Activated CD4-positive, alpha-beta T cell treated with anti-CD3 and anti-CD28 coated beads for 36 hours (primary cell): ENCODE measurements at regions of chr17 and their contacts with region 1.

Region 1: GRCh38 chr17:76232342-76232741 is 8.0 kb downstream of the RNF157 start:
- DNase-seq: no peak
- ATAC-seq: no peak
- H3K4me3 Mint-ChIP-seq: no peak overlapping the region
- H3K27ac Mint-ChIP-seq: no peak overlapping the region
- H3K4me1 Mint-ChIP-seq: peaks cover 41% of the 10 kb centered on the region
- H3K27me3 Mint-ChIP-seq: no peaks in the 10 kb centered on the region

Region 2: DNA sequence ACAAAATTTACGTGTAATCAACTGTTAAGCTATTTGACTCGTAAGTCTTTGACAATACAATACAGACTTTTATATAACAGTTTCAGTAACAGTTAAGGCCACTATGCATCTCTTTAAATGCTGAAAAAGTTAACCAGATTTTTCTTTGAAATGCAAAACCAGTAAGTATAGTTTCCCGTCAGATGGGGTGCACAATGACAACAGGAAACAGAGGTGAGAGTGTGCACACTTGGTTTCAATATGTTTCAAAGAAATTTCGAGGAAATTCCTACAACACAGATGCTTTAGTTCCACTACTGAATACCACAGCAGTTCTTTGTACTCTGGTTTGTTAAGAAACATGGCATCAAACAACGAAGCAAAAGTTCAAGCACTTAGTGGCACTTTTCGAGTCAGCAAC is 40.4 kb before region 1 on chr17:
- CTCF ChIA-PET with region 1: interaction called, 4 read pairs
- POLR2A ChIA-PET with region 1: interaction called, 7 read pairs
- intact Hi-C with region 1: loop called in 1 of 2 experiments (anchors 5 kb)
- DNase-seq: peak; percentile 63
- ATAC-seq: peak; percentile 79
- H3K4me3 Mint-ChIP-seq: peak overlapping the region; percentile 61
- H3K27ac Mint-ChIP-seq: peak overlapping the region; percentile 96
- H3K4me1 Mint-ChIP-seq: peaks cover 80% of the 10 kb centered on the region
- H3K27me3 Mint-ChIP-seq: no peaks in the 10 kb centered on the region

Region 3: DNA sequence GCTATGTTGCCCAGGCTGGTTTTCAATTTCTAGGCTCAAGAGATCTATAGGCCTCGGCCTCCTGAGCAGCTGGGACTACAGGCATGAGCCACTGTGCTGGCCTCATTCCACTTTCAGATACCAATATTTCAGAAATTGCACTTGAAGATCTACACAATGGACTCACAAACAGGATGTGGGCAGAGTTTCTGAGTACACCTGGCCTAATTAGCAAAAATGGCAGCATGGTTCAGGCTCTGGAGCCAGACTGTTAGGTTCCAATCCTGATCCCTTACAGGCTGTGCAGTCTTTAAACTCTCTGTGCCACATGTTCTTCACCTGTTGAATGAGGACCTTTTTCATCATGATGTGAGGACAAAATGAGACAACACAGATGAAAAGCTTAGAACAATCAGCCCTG is 24.2 kb before region 1 on chr17:
- CTCF ChIA-PET with region 1: interaction called, 3 read pairs
- POLR2A ChIA-PET with region 1: no interaction called
- intact Hi-C with region 1: loop called in 1 of 2 experiments (anchors 2 kb)
- DNase-seq: no peak
- ATAC-seq: peak; percentile 33
- H3K4me3 Mint-ChIP-seq: no peak overlapping the region
- H3K27ac Mint-ChIP-seq: peak overlapping the region; percentile 19
- H3K4me1 Mint-ChIP-seq: peaks cover 33% of the 10 kb centered on the region
- H3K27me3 Mint-ChIP-seq: no peaks in the 10 kb centered on the region